ENCODE measurements at regions of chr17 and their contacts with region 1.

Region 1: DNA sequence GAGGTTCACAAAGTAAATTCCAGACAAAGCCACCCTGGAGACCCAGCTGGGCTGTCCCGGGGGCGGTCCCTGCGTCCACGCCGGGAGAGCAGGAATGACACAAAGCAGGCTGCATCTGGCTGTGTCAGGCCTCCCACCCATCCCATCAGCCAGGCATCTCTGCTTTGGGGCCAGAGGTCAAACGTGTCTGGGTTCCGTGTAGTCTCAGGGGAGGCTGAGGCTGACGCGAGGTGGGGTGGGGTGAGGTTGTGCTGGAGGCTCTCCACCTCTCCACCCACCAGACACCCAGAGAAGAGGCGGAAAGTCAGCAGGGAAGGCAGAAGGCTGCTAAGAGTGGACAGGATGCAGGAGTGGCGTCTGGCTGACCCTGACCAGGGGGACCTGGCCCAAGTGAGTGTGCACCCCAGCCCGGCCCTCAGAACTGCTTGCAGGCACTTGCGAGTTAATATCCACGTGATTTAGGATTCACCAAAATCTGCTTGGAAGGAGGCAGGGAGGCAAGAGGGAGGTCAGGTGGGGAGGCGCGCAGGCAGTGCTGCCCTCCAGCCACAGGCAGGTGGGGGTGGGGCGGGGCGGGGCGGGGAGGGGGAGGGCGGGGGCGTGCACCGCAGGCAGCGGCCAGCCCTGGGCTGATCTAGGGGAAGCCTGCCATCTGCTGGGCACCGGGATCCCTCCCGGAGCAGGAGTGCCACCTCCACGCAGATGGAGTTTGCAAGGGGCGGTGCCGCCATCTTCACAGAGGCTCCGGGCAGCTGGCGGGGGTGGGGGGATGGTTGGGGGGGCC is 44.3 kb downstream of the TBC1D16 start:
- DNase-seq: peak; percentile 76 to 92 (median 84)
- ATAC-seq: peak; percentile 95
- H3K4me3 ChIP-seq: peak overlapping the region; percentile 76
- H3K4me3 Mint-ChIP-seq: peak overlapping the region; percentile 82
- H3K27ac ChIP-seq: no peak overlapping the region
- H3K27ac Mint-ChIP-seq: peak overlapping the region; percentile 66
- H3K4me1 ChIP-seq: peaks cover 41% of the 10 kb centered on the region
- H3K4me1 Mint-ChIP-seq: peaks cover 46% of the 10 kb centered on the region
- H3K27me3 ChIP-seq: no peaks in the 10 kb centered on the region
- H3K27me3 Mint-ChIP-seq: no peaks in the 10 kb centered on the region
- CTCF ChIP-seq: peak; percentile 60

Region 2: GRCh38 chr17:79074650-79075445 is 916.5 kb before region 1 on chr17 and contains the start of gene ENGASE:
- CTCF ChIA-PET with region 1: no interaction called
- POLR2A ChIA-PET with region 1: no interaction called
- intact Hi-C with region 1: loop called in 1 of 2 experiments (anchors 10 kb)
- DNase-seq: peak; percentile 81 to 96 (median 89)
- ATAC-seq: peak; percentile 92
- H3K4me3 ChIP-seq: peak within 1 kb of the TSS; percentile 61
- H3K4me3 Mint-ChIP-seq: peak within 1 kb of the TSS; percentile 92
- H3K27ac ChIP-seq: peak within 1 kb of the TSS; percentile 26 to 56
- H3K27ac Mint-ChIP-seq: peak within 1 kb of the TSS; percentile 81
- H3K4me1 ChIP-seq: peaks cover 28% of the 10 kb centered on the region
- H3K4me1 Mint-ChIP-seq: peaks cover 20% of the 10 kb centered on the region
- H3K27me3 ChIP-seq: no peaks in the 10 kb centered on the region
- H3K27me3 Mint-ChIP-seq: no peaks in the 10 kb centered on the region
- CTCF ChIP-seq: no peak
- total RNA-seq, gene ENGASE: 49.8 to 50.9 TPM

Region 3: GRCh38 chr17:79087428-79088143 is 903.7 kb before region 1 on chr17:
- CTCF ChIA-PET with region 1: no interaction called
- POLR2A ChIA-PET with region 1: no interaction called
- intact Hi-C with region 1: loop called in 1 of 2 experiments (anchors 5 kb)
- DNase-seq: peak; percentile 51 to 84 (median 69)
- ATAC-seq: peak; percentile 93
- H3K4me3 ChIP-seq: no peak overlapping the region
- H3K4me3 Mint-ChIP-seq: no peak overlapping the region
- H3K27ac ChIP-seq: no peak overlapping the region
- H3K27ac Mint-ChIP-seq: no peak overlapping the region
- H3K4me1 ChIP-seq: peaks cover 14% of the 10 kb centered on the region
- H3K4me1 Mint-ChIP-seq: no peaks in the 10 kb centered on the region
- H3K27me3 ChIP-seq: no peaks in the 10 kb centered on the region
- H3K27me3 Mint-ChIP-seq: peaks cover 4% of the 10 kb centered on the region
- CTCF ChIP-seq: peak; percentile 91

Region 4: GRCh38 chr17:79741751-79742588 is 249.4 kb before region 1 on chr17:
- CTCF ChIA-PET with region 1: interaction called, 5 read pairs
- POLR2A ChIA-PET with region 1: no interaction called
- intact Hi-C with region 1: loop called (anchors 1 kb)
- DNase-seq: peak; percentile 59 to 85 (median 70)
- ATAC-seq: peak; percentile 55
- H3K4me3 ChIP-seq: no peak overlapping the region
- H3K4me3 Mint-ChIP-seq: no peak overlapping the region
- H3K27ac ChIP-seq: no peak overlapping the region
- H3K27ac Mint-ChIP-seq: no peak overlapping the region
- H3K4me1 ChIP-seq: peaks cover 29% of the 10 kb centered on the region
- H3K4me1 Mint-ChIP-seq: peaks cover 14% of the 10 kb centered on the region
- H3K27me3 ChIP-seq: peaks cover 29 to 30% of the 10 kb centered on the region in 2 experiments
- H3K27me3 Mint-ChIP-seq: peaks cover 54% of the 10 kb centered on the region
- CTCF ChIP-seq: peak; percentile 94

Region 5: DNA sequence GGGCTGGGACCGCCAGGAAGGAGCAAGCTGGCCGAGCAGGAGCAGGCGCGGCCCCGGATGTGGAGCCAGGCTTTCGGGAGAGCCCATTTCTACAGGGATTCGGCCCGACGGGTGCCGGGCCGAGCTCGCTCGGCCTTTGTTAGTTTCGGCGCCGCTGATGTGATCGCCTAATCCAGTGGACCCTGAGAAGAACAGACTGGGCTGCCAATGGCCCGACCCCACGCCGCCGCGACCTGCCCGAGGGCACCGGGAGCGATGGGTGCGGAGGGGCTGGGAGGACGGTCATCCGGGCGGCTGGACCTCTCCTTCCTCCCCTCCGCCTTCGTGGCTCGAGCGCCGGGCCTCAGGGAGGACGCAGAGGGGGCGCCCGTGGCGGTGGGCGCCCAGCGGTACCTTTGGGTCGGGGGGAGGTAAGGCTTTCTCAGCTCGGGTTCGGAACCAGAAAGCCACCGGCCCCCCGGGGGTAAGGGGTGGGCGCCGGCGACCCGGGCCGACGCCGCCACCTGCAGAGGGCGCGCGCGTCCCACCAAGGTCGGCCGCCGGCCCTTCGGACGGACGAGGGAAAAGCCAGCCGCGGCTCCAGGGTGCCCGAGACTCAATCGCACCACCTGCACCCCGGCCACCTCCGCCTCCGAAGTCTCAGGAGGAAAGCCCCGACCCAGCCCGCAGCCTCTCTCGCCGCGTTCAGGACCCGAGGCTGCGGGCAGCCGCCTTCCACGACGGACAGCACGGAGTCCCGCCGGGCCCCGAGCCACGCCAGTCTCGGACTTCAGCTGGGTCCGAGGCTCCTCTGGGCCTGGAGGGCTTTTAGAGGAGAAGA is 201.6 kb before region 1 on chr17:
- CTCF ChIA-PET with region 1: no interaction called
- POLR2A ChIA-PET with region 1: no interaction called
- intact Hi-C with region 1: loop called in 1 of 2 experiments (anchors 1 kb)
- DNase-seq: peak in 3 of 14 experiments; percentile 48 to 60 (median 56)
- ATAC-seq: peak; percentile 16
- H3K4me3 ChIP-seq: no peak overlapping the region
- H3K4me3 Mint-ChIP-seq: no peak overlapping the region
- H3K27ac ChIP-seq: no peak overlapping the region
- H3K27ac Mint-ChIP-seq: no peak overlapping the region
- H3K4me1 ChIP-seq: peaks cover 32% of the 10 kb centered on the region
- H3K4me1 Mint-ChIP-seq: peaks cover 9% of the 10 kb centered on the region
- H3K27me3 ChIP-seq: peaks cover 63 to 80% of the 10 kb centered on the region in 2 experiments
- H3K27me3 Mint-ChIP-seq: peaks cover 70% of the 10 kb centered on the region
- CTCF ChIP-seq: peak; percentile 81

Region 6: GRCh38 chr17:79844869-79845600 is 146.3 kb before region 1 on chr17:
- CTCF ChIA-PET with region 1: interaction called, 3 read pairs
- POLR2A ChIA-PET with region 1: interaction called, 10 read pairs
- intact Hi-C with region 1: loop called in 1 of 2 experiments (anchors 2 kb)
- DNase-seq: peak in 9 of 14 experiments; percentile 34 to 77 (median 55)
- ATAC-seq: peak; percentile 54
- H3K4me3 ChIP-seq: no peak overlapping the region
- H3K4me3 Mint-ChIP-seq: peak overlapping the region; percentile 7
- H3K27ac ChIP-seq: no peak overlapping the region
- H3K27ac Mint-ChIP-seq: no peak overlapping the region
- H3K4me1 ChIP-seq: peaks cover 54% of the 10 kb centered on the region
- H3K4me1 Mint-ChIP-seq: peaks cover 35% of the 10 kb centered on the region
- H3K27me3 ChIP-seq: peaks cover 40 to 43% of the 10 kb centered on the region in 2 experiments
- H3K27me3 Mint-ChIP-seq: peaks cover 60% of the 10 kb centered on the region
- CTCF ChIP-seq: peak; percentile 80

Region 7: GRCh38 chr17:79905832-79906231 is 85.5 kb before region 1 on chr17:
- CTCF ChIA-PET with region 1: no interaction called
- POLR2A ChIA-PET with region 1: no interaction called
- intact Hi-C with region 1: no loop called
- DNase-seq: no peak
- ATAC-seq: no peak
- H3K4me3 ChIP-seq: no peak overlapping the region
- H3K4me3 Mint-ChIP-seq: no peak overlapping the region
- H3K27ac ChIP-seq: no peak overlapping the region
- H3K27ac Mint-ChIP-seq: no peak overlapping the region
- H3K4me1 ChIP-seq: no peaks in the 10 kb centered on the region
- H3K4me1 Mint-ChIP-seq: no peaks in the 10 kb centered on the region
- H3K27me3 ChIP-seq: peaks cover 9 to 16% of the 10 kb centered on the region in 2 experiments
- H3K27me3 Mint-ChIP-seq: peaks cover 24% of the 10 kb centered on the region
- CTCF ChIP-seq: no peak

Measured in CD4-positive, alpha-beta T cell (primary cell).